B cell (primary cell): ENCODE measurements at regions of chr20 and their contacts with region 1.

Region 1: GRCh38 chr20:39874049-39874888 is 814.8 kb downstream of the MAFB start:
- DNase-seq: peak; percentile 68
- ATAC-seq: peak; percentile 53
- H3K4me3 ChIP-seq: no peak overlapping the region
- H3K4me3 Mint-ChIP-seq: no peak overlapping the region
- H3K27ac ChIP-seq: no peak overlapping the region
- H3K27ac Mint-ChIP-seq: no peak overlapping the region
- H3K4me1 ChIP-seq: no peaks in the 10 kb centered on the region
- H3K4me1 Mint-ChIP-seq: peaks cover 6% of the 10 kb centered on the region
- H3K27me3 ChIP-seq: no peaks in the 10 kb centered on the region
- H3K27me3 Mint-ChIP-seq: peaks cover 5% of the 10 kb centered on the region
- CTCF ChIP-seq: peak; percentile 73

Region 2: GRCh38 chr20:39264506-39265172 is 609.6 kb before region 1 on chr20:
- CTCF ChIA-PET with region 1: interaction called, 55 read pairs
- POLR2A ChIA-PET with region 1: no interaction called
- intact Hi-C with region 1: loop called (anchors 1 kb)
- DNase-seq: peak; percentile 46
- ATAC-seq: no peak
- H3K4me3 ChIP-seq: no peak overlapping the region
- H3K4me3 Mint-ChIP-seq: no peak overlapping the region
- H3K27ac ChIP-seq: no peak overlapping the region
- H3K27ac Mint-ChIP-seq: no peak overlapping the region
- H3K4me1 ChIP-seq: no peaks in the 10 kb centered on the region
- H3K4me1 Mint-ChIP-seq: no peaks in the 10 kb centered on the region
- H3K27me3 ChIP-seq: no peaks in the 10 kb centered on the region
- H3K27me3 Mint-ChIP-seq: peaks cover 15% of the 10 kb centered on the region
- CTCF ChIP-seq: peak; percentile 91

Region 3: DNA sequence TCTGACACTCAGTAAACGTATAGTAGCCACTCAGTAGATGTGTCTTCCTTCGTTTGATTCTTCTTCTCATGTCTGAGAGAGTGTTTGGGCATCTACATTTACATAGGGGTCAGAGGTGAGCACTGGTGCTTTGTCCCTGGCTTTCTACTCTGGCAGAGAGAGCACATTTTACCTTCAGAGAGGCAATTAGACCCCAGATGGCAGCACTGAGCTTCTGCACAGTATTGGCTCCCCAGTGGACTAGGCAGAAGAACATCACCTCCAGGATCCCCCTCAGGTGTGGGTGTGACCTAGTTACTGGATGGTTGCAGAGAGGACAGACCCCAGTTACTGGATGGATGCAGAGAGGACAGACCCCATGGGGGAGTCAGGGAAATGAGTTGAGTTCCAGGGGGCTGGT is 585.0 kb before region 1 on chr20:
- CTCF ChIA-PET with region 1: interaction called, 15 read pairs
- POLR2A ChIA-PET with region 1: no interaction called
- intact Hi-C with region 1: no loop called
- DNase-seq: peak; percentile 38
- ATAC-seq: no peak
- H3K4me3 ChIP-seq: no peak overlapping the region
- H3K4me3 Mint-ChIP-seq: no peak overlapping the region
- H3K27ac ChIP-seq: no peak overlapping the region
- H3K27ac Mint-ChIP-seq: no peak overlapping the region
- H3K4me1 ChIP-seq: no peaks in the 10 kb centered on the region
- H3K4me1 Mint-ChIP-seq: peaks cover 3% of the 10 kb centered on the region
- H3K27me3 ChIP-seq: peaks cover 0 to 1% (median 0%) of the 10 kb centered on the region in 4 experiments
- H3K27me3 Mint-ChIP-seq: peaks cover 4% of the 10 kb centered on the region
- CTCF ChIP-seq: peak; percentile 46

Region 4: GRCh38 chr20:39829256-39829655 is 45.0 kb before region 1 on chr20:
- CTCF ChIA-PET with region 1: interaction called, 10 read pairs
- POLR2A ChIA-PET with region 1: no interaction called
- intact Hi-C with region 1: no loop called
- DNase-seq: no peak
- ATAC-seq: no peak
- H3K4me3 ChIP-seq: no peak overlapping the region
- H3K4me3 Mint-ChIP-seq: peak overlapping the region; percentile 66
- H3K27ac ChIP-seq: peak overlapping the region in 1 of 2 donors; percentile 54
- H3K27ac Mint-ChIP-seq: peak overlapping the region; percentile 21
- H3K4me1 ChIP-seq: peaks cover 21 to 44% of the 10 kb centered on the region in 2 donors
- H3K4me1 Mint-ChIP-seq: peaks cover 55% of the 10 kb centered on the region
- H3K27me3 ChIP-seq: no peaks in the 10 kb centered on the region
- H3K27me3 Mint-ChIP-seq: no peaks in the 10 kb centered on the region
- CTCF ChIP-seq: no peak

Region 5: GRCh38 chr20:39862470-39862891 is 11.8 kb before region 1 on chr20:
- CTCF ChIA-PET with region 1: interaction called, 10 read pairs
- POLR2A ChIA-PET with region 1: no interaction called
- intact Hi-C with region 1: no loop called
- DNase-seq: no peak
- ATAC-seq: no peak
- H3K4me3 ChIP-seq: no peak overlapping the region
- H3K4me3 Mint-ChIP-seq: no peak overlapping the region
- H3K27ac ChIP-seq: no peak overlapping the region
- H3K27ac Mint-ChIP-seq: no peak overlapping the region
- H3K4me1 ChIP-seq: no peaks in the 10 kb centered on the region
- H3K4me1 Mint-ChIP-seq: no peaks in the 10 kb centered on the region
- H3K27me3 ChIP-seq: no peaks in the 10 kb centered on the region
- H3K27me3 Mint-ChIP-seq: peaks cover 10% of the 10 kb centered on the region
- CTCF ChIP-seq: no peak

Region 6: GRCh38 chr20:40073535-40074111 is 199.4 kb after region 1 on chr20:
- CTCF ChIA-PET with region 1: no interaction called
- POLR2A ChIA-PET with region 1: no interaction called
- intact Hi-C with region 1: no loop called
- DNase-seq: no peak
- ATAC-seq: no peak
- H3K4me3 ChIP-seq: no peak overlapping the region
- H3K4me3 Mint-ChIP-seq: no peak overlapping the region
- H3K27ac ChIP-seq: no peak overlapping the region
- H3K27ac Mint-ChIP-seq: no peak overlapping the region
- H3K4me1 ChIP-seq: no peaks in the 10 kb centered on the region
- H3K4me1 Mint-ChIP-seq: no peaks in the 10 kb centered on the region
- H3K27me3 ChIP-seq: no peaks in the 10 kb centered on the region
- H3K27me3 Mint-ChIP-seq: no peaks in the 10 kb centered on the region
- CTCF ChIP-seq: no peak